ENCODE measurements at regions of chr1 and their contacts with region 1.

Region 1: DNA sequence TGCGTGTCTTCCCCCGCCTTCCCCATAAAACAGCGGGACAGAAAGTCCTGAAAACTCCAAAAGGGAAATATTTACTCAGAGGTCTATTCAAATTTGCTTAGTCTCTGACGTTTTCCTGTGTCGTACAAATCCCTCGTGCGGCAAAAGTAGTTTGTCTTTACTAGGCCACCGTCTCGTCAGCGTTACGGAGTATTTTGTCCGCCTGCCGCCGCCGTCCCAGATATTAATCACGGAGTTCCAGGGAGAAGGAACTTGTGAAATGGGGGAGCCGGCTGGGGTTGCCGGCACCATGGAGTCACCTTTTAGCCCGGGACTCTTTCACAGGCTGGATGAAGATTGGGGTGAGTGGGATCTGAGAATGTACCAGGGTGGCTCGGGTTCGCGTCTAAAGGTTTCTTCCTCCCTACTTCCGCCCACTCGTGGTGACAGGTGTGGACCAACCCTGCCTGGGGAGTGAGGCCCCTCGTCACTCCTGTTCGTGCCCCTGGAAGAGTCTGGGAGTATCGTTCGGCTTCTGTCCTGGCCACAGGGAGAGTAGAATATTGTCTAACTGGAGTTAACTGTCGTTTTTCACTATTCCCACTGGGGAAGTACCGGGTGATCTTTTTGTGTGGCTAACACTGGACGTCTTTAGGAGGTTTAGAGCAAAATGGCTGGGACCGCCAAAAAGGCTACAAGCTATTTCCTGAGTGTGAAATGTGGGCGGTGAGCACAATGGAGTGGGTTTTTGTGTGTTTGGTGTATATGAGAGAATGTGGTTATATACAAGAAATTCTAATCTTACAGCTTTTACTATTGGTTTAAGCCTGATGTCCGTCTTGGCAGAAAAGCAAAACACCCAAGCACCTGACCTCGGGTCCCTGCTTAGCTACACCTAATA is at the start of gene ATF6:
- DNase-seq: peak; percentile 98
- H3K4me3 Mint-ChIP-seq: peak within 1 kb of the TSS; percentile 100
- H3K27ac Mint-ChIP-seq: peak within 1 kb of the TSS; percentile 100
- H3K4me1 Mint-ChIP-seq: peaks cover 25% of the 10 kb centered on the region
- H3K27me3 Mint-ChIP-seq: no peaks in the 10 kb centered on the region
- CTCF ChIP-seq: no peak
- total RNA-seq, gene ATF6: 56.3 and 71.8 TPM in 2 replicates

Region 2: DNA sequence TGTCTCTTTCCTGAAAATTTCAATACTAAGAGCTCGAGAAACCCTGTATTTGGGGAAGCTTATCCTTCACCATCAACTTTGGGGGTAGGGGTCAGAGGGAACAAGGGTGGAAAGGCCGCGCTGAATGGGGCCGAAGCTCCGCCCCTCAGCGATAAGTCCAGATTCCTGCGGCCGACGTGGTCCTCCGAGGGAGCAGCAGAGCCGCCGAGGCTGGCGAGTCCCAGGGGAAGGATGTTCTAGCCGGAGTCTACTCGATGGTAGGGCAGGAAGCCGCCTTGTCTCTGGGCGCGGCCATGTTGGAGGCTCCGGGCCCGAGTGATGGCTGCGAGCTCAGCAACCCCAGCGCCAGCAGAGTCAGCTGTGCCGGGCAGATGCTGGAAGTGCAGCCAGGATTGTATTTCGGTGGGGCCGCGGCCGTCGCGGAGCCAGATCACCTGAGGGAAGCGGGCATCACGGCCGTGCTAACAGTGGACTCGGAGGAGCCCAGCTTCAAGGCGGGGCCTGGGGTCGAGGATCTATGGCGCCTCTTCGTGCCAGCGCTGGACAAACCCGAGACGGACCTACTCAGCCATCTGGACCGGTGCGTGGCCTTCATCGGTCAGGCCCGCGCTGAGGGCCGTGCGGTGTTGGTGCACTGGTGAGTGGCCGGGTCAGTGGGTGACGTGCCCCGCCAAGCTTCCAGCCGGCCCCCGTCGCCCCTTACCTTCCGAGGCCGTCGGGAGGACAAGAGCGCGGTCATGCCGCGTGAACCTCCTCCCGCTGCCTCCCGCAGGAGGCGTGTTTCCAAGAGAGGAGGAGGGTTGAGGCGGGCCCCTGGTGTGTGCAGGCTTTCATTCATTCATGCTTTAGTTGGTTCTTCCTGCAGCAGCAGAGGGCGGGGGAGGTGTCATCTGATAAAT is 16.6 kb before region 1 on chr1 and contains the start of gene DUSP12:
- CTCF ChIA-PET with region 1: interaction called, 8 read pairs
- POLR2A ChIA-PET with region 1: interaction called, 17 read pairs
- intact Hi-C with region 1: loop called (anchors 1 kb)
- DNase-seq: peak; percentile 98
- H3K4me3 Mint-ChIP-seq: peak within 1 kb of the TSS; percentile 92
- H3K27ac Mint-ChIP-seq: peak within 1 kb of the TSS; percentile 95
- H3K4me1 Mint-ChIP-seq: peaks cover 29% of the 10 kb centered on the region
- H3K27me3 Mint-ChIP-seq: no peaks in the 10 kb centered on the region
- CTCF ChIP-seq: no peak
- total RNA-seq, gene DUSP12: 57.0 and 65.0 TPM in 2 replicates

Region 3: GRCh38 chr1:161781995-161782394 is 15.7 kb after region 1 on chr1:
- CTCF ChIA-PET with region 1: interaction called, 5 read pairs
- POLR2A ChIA-PET with region 1: interaction called, 12 read pairs
- intact Hi-C with region 1: no loop called
- DNase-seq: no peak
- H3K4me3 Mint-ChIP-seq: no peak overlapping the region
- H3K27ac Mint-ChIP-seq: peak overlapping the region; percentile 3
- H3K4me1 Mint-ChIP-seq: no peaks in the 10 kb centered on the region
- H3K27me3 Mint-ChIP-seq: no peaks in the 10 kb centered on the region
- CTCF ChIP-seq: no peak

Region 4: DNA sequence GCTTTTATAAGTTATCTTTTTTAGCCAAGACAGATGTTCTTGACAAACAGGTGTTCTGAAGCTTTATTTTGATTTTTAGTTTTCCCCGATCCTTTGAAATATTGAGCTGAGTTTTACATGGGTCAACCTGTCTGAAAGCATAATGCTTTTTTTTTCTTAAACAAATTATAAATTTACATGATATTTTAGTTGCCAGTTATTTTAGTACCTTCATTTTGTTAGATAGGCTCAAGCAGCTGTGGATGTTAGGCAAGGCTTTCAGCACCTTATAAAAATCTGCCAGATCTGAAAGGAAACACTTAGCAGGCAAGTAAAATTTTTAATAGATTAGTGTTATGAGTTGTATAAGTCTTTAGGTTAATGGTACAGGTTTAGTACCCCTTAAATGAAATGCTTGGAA is 33.5 kb after region 1 on chr1:
- CTCF ChIA-PET with region 1: no interaction called
- POLR2A ChIA-PET with region 1: no interaction called
- intact Hi-C with region 1: no loop called
- DNase-seq: no peak
- H3K4me3 Mint-ChIP-seq: no peak overlapping the region
- H3K27ac Mint-ChIP-seq: no peak overlapping the region
- H3K4me1 Mint-ChIP-seq: no peaks in the 10 kb centered on the region
- H3K27me3 Mint-ChIP-seq: no peaks in the 10 kb centered on the region
- CTCF ChIP-seq: no peak

Measured in MCF 10A (cell line).